PC-9 (cell line): ENCODE measurements at regions of chr11 and their contacts with region 1.

Region 1: GRCh38 chr11:35144136-35144741 is 5.3 kb downstream of the CD44 start:
- DNase-seq: peak; percentile 69 to 91
- H3K4me3 ChIP-seq: peak overlapping the region; percentile 70
- H3K27ac ChIP-seq: peak overlapping the region; percentile 91
- H3K4me1 ChIP-seq: peaks cover 85% of the 10 kb centered on the region
- H3K27me3 ChIP-seq: no peaks in the 10 kb centered on the region
- CTCF ChIP-seq: no peak

Region 2: GRCh38 chr11:34492806-34493414 is 651.3 kb before region 1 on chr11:
- CTCF ChIA-PET with region 1: no interaction called
- POLR2A ChIA-PET with region 1: no interaction called
- intact Hi-C with region 1: no loop called
- DNase-seq: peak; percentile 41 to 62
- H3K4me3 ChIP-seq: no peak overlapping the region
- H3K27ac ChIP-seq: no peak overlapping the region
- H3K4me1 ChIP-seq: peaks cover 8% of the 10 kb centered on the region
- H3K27me3 ChIP-seq: no peaks in the 10 kb centered on the region
- CTCF ChIP-seq: peak; percentile 91

Region 3: GRCh38 chr11:34907934-34908593 is 236.2 kb before region 1 on chr11:
- CTCF ChIA-PET with region 1: no interaction called
- POLR2A ChIA-PET with region 1: no interaction called
- intact Hi-C with region 1: no loop called
- DNase-seq: no peak
- H3K4me3 ChIP-seq: no peak overlapping the region
- H3K27ac ChIP-seq: no peak overlapping the region
- H3K4me1 ChIP-seq: peaks cover 20% of the 10 kb centered on the region
- H3K27me3 ChIP-seq: no peaks in the 10 kb centered on the region
- CTCF ChIP-seq: no peak

Region 4: GRCh38 chr11:35089666-35090065 is 54.6 kb before region 1 on chr11:
- CTCF ChIA-PET with region 1: no interaction called
- POLR2A ChIA-PET with region 1: no interaction called
- intact Hi-C with region 1: no loop called
- DNase-seq: no peak
- H3K4me3 ChIP-seq: no peak overlapping the region
- H3K27ac ChIP-seq: no peak overlapping the region
- H3K4me1 ChIP-seq: peaks cover 19% of the 10 kb centered on the region
- H3K27me3 ChIP-seq: no peaks in the 10 kb centered on the region
- CTCF ChIP-seq: no peak

Region 5: GRCh38 chr11:35111161-35112055 is 32.8 kb before region 1 on chr11:
- CTCF ChIA-PET with region 1: interaction called, 9 read pairs
- POLR2A ChIA-PET with region 1: interaction called, 10 read pairs
- intact Hi-C with region 1: loop called (anchors 1 kb)
- DNase-seq: peak; percentile 87 to 88
- H3K4me3 ChIP-seq: no peak overlapping the region
- H3K27ac ChIP-seq: peak overlapping the region; percentile 82
- H3K4me1 ChIP-seq: peaks cover 43% of the 10 kb centered on the region
- H3K27me3 ChIP-seq: no peaks in the 10 kb centered on the region
- CTCF ChIP-seq: no peak

Region 6: DNA sequence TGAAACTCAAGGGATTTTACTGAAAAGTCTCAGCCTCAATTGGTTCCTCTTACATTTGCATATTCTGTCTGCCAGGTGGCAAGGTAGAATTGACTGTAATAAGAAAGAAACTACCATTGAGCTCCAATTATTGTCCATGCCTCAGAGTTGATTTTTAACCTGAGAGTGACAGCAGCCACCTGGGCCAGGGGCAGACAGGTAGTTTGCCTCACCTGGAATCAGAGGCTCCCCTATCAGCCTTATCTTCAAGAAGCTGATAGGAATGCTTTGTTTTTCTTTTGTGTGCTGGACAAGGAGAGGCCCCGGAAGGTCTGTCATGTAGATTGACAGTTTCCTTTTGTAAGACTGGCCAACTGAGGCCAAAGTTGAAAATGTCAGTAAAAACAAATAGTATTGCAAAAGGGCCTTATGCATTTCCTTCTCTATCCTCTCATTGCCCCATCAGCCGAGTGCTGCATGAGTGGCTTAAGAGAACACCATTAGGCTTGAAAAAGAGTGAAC is 28.8 kb after region 1 on chr11:
- CTCF ChIA-PET with region 1: interaction called, 3 read pairs
- POLR2A ChIA-PET with region 1: interaction called, 12 read pairs
- intact Hi-C with region 1: loop called (anchors 1 kb)
- DNase-seq: peak; percentile 60 to 98
- H3K4me3 ChIP-seq: peak overlapping the region; percentile 33
- H3K27ac ChIP-seq: peak overlapping the region; percentile 92
- H3K4me1 ChIP-seq: peaks cover 95% of the 10 kb centered on the region
- H3K27me3 ChIP-seq: no peaks in the 10 kb centered on the region
- CTCF ChIP-seq: no peak

Region 7: DNA sequence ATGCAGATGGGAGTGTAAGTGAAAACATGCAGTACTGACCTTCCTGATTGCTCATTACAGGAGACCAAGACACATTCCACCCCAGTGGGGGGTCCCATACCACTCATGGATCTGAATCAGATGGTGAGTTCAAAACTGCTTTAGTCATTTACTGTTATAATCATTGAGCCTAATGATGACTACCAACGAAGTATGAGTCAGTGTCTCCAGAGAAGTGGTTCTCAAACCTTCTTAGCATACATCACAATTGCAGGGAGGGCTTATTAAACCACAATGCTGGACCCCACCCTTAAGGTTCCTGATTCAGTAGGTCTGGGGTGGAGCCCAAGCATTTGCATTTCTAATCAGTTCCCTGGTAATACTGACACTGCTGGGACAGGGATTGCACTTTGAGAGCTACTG is 70.6 kb after region 1 on chr11:
- CTCF ChIA-PET with region 1: no interaction called
- POLR2A ChIA-PET with region 1: no interaction called
- intact Hi-C with region 1: loop called (anchors 10 kb)
- DNase-seq: peak; percentile 58 to 89
- H3K4me3 ChIP-seq: no peak overlapping the region
- H3K27ac ChIP-seq: peak overlapping the region; percentile 64
- H3K4me1 ChIP-seq: peaks cover 67% of the 10 kb centered on the region
- H3K27me3 ChIP-seq: no peaks in the 10 kb centered on the region
- CTCF ChIP-seq: no peak